ENCODE measurements at regions of chr1 and their contacts with region 1.

Region 1: GRCh38 chr1:32400876-32401631 is 6.8 kb upstream of the BSDC1 start:
- DNase-seq: peak; percentile 69
- H3K4me3 Mint-ChIP-seq: no peak overlapping the region
- H3K27ac Mint-ChIP-seq: no peak overlapping the region
- H3K4me1 Mint-ChIP-seq: no peaks in the 10 kb centered on the region
- H3K27me3 Mint-ChIP-seq: peaks cover 17% of the 10 kb centered on the region

Region 2: GRCh38 chr1:32349211-32349708 is 51.8 kb before region 1 on chr1:
- CTCF ChIA-PET with region 1: no interaction called
- DNase-seq: peak; percentile 25
- H3K4me3 Mint-ChIP-seq: peak overlapping the region; percentile 18
- H3K27ac Mint-ChIP-seq: peak overlapping the region; percentile 60
- H3K4me1 Mint-ChIP-seq: peaks cover 58% of the 10 kb centered on the region
- H3K27me3 Mint-ChIP-seq: peaks cover 47% of the 10 kb centered on the region

Region 3: GRCh38 chr1:32361674-32362473 is 39.2 kb before region 1 on chr1:
- CTCF ChIA-PET with region 1: no interaction called
- DNase-seq: peak; percentile 40
- H3K4me3 Mint-ChIP-seq: no peak overlapping the region
- H3K27ac Mint-ChIP-seq: no peak overlapping the region
- H3K4me1 Mint-ChIP-seq: peaks cover 24% of the 10 kb centered on the region
- H3K27me3 Mint-ChIP-seq: peaks cover 22% of the 10 kb centered on the region

Region 4: GRCh38 chr1:32413507-32414185 is 12.6 kb after region 1 on chr1:
- CTCF ChIA-PET with region 1: interaction called, 55 read pairs
- DNase-seq: peak; percentile 81
- H3K4me3 Mint-ChIP-seq: no peak overlapping the region
- H3K27ac Mint-ChIP-seq: no peak overlapping the region
- H3K4me1 Mint-ChIP-seq: peaks cover 2% of the 10 kb centered on the region
- H3K27me3 Mint-ChIP-seq: peaks cover 17% of the 10 kb centered on the region

Region 5: DNA sequence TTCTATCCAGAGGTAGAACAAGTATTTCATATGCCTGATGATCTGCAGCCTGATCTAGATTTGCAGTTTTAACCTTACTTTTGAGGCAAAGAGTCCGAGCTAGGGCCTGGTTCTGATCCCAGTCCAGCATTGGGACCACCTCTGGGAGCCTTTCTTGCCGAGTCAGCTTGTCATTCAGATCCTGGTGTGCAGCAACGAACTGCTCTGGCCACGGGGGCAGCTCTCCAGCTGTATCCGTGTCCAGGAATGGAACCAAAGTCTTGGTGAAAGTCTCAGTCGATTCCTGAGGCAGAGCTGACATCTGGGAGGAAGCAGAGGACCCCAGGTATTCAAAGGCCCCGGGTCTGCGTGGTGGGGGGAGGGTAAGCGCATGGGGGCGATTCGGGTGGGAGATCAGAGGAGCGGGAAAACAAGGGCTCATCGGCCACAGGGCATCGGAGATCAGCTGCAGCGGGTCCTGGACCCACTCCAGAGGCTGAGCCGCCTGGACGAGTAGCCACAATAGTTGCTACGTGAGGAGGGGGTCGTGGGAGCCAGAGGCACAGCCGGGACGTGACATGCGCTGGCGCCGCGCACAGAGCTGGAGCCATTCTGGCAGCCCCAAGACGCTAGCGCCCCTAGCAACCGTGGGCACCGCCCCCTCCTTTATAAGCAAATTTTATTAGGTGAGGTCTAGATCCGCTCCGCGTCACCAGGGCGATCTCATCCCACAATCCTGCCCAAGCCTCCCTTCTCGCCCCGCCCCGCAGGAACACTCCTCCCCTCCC is 25.6 kb after region 1 on chr1:
- CTCF ChIA-PET with region 1: interaction called, 17 read pairs
- DNase-seq: no peak
- H3K4me3 Mint-ChIP-seq: no peak overlapping the region
- H3K27ac Mint-ChIP-seq: no peak overlapping the region
- H3K4me1 Mint-ChIP-seq: no peaks in the 10 kb centered on the region
- H3K27me3 Mint-ChIP-seq: peaks cover 79% of the 10 kb centered on the region

Measured in activated naive CD4-positive, alpha-beta T cell treated with anti-CD3 and anti-CD28 coated beads, Interleukin-2, amount 10 ng/mL, durations not matched to agents 7 days and 5 days (primary cell).